Breast epithelium (tissue), 4 donors: ENCODE measurements at regions of chr6 and their contacts with region 1.

Region 1: DNA sequence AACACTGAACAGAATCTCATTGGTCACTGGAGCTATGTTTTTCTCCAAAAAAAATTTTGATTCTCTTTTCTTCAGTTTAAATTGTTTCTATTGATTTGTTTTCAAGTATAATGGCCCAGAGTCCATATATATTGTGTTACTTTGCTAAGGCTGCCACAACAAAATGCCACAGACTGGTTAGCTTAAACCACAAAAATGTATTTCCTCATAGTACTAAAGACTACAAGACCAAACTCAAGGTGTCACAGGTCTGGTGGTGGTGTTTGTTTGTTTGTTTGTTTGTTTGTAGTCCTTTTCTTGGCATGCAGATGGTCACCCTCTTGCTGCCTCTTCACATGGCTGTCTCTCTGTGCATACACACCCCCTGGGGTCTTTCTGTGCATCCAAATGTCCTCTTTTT is 34.0 kb downstream of the BMP5 start:
- DNase-seq: no peak
- H3K4me3 ChIP-seq: no peak overlapping the region
- H3K27ac ChIP-seq: no peak overlapping the region
- H3K4me1 ChIP-seq: no peaks in the 10 kb centered on the region
- H3K27me3 ChIP-seq: no peaks in the 10 kb centered on the region
- CTCF ChIP-seq: no peak
- POLR2A ChIP-seq: no peak

Region 2: DNA sequence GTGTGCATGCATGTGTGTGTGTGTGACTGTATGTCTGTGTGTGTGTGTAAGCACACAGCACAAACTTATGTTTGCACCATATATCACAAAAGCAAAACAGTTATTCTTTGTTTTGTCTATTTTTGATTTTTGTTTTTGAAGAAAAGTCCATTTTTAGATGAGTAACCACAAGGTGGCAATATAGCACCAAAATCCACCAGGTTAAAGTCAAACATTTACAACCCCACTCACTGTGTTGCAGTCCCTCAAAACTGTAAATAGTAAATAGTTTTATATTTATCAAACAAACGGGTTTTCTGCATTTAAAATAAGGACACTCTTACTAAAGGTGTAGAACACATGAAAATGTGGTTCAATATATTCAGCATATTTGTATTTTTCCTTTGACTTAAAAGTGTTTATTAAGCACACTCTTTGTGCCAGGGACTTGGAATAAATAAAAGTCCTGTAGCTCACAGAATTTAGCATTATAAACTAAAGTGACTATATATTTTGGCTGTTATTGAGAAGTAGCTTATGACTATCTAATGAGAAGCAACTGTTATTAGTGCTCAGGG is 395.6 kb before region 1 on chr6:
- intact Hi-C with region 1: loop called (anchors 10 kb)
- DNase-seq: no peak
- H3K4me3 ChIP-seq: no peak overlapping the region
- H3K27ac ChIP-seq: no peak overlapping the region
- H3K4me1 ChIP-seq: no peaks in the 10 kb centered on the region
- H3K27me3 ChIP-seq: no peaks in the 10 kb centered on the region
- CTCF ChIP-seq: peak; percentile 50 to 78 (median 61)
- POLR2A ChIP-seq: no peak

Region 3: GRCh38 chr6:55853008-55854001 is 12.0 kb after region 1 on chr6:
- intact Hi-C with region 1: no loop called
- DNase-seq: no peak
- H3K4me3 ChIP-seq: no peak overlapping the region
- H3K27ac ChIP-seq: no peak overlapping the region
- H3K4me1 ChIP-seq: no peaks in the 10 kb centered on the region
- H3K27me3 ChIP-seq: no peaks in the 10 kb centered on the region
- CTCF ChIP-seq: no peak
- POLR2A ChIP-seq: no peak